ENCODE measurements at regions of chr14 and their contacts with region 1.

Region 1: DNA sequence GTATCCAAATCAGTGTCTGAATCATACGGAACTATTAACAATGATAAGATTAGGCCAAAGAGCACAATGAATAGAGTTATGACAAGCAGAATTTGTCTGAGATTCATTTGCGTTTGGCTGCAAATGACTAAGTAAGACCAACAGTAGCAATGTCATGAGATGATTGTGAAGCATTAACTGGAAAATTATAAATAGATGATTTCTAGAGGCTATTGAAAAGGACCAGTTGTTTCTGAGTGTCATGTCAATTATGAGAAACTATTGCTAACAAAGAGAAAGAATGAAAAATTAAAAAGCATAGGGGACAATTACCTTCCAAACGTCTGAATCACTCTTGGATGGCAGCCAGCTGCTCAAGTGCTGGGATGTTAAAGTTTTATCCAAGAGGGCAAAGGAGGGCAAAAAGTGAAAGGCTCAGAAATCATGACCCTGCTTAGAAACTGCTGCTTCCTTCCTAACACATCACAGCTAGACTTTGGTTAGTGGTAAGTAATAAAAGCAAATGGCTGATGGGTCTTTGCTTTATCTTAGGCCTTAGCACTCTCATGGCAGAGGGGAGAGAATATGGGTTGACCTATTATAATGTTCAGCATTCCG is 89.0 kb downstream of the AKAP6 start:
- DNase-seq: peak in 1 of 2 donors; percentile 34
- ATAC-seq: peak in 5 of 8 donors; percentile 32 to 68 (median 42)
- H3K4me3 ChIP-seq: peak overlapping the region in 9 of 10 donors; percentile 8 to 47 (median 35)
- H3K27ac ChIP-seq: peak overlapping the region; percentile 23 to 88 (median 76)
- H3K4me1 ChIP-seq: peaks cover 0 to 32% (median 13%) of the 10 kb centered on the region in 9 donors
- H3K27me3 ChIP-seq: no peaks in the 10 kb centered on the region
- CTCF ChIP-seq: no peak

Region 2: DNA sequence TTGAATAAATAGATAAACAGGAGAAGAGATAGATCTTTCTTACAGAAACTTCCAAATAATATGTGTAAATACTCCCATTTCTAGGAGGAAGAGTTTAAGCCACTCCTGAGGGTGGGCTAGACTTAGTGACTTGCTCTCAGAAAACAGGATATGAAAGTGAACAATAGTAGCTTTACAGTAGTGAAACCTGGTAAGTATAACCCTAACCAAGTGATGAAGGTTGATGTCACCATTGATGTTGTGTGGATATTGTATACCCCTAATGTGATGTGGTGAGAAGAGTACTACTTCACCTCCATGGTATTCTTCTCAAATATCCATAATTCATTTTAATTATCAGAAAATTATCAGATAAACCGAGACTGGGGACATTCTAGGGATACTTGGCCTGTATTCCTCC is 68.0 kb before region 1 on chr14:
- intact Hi-C with region 1: no loop called
- DNase-seq: no peak
- ATAC-seq: no peak
- H3K4me3 ChIP-seq: no peak overlapping the region
- H3K27ac ChIP-seq: no peak overlapping the region
- H3K4me1 ChIP-seq: peaks cover 0 to 10% (median 0%) of the 10 kb centered on the region in 9 donors
- H3K27me3 ChIP-seq: no peaks in the 10 kb centered on the region
- CTCF ChIP-seq: no peak

Region 3: DNA sequence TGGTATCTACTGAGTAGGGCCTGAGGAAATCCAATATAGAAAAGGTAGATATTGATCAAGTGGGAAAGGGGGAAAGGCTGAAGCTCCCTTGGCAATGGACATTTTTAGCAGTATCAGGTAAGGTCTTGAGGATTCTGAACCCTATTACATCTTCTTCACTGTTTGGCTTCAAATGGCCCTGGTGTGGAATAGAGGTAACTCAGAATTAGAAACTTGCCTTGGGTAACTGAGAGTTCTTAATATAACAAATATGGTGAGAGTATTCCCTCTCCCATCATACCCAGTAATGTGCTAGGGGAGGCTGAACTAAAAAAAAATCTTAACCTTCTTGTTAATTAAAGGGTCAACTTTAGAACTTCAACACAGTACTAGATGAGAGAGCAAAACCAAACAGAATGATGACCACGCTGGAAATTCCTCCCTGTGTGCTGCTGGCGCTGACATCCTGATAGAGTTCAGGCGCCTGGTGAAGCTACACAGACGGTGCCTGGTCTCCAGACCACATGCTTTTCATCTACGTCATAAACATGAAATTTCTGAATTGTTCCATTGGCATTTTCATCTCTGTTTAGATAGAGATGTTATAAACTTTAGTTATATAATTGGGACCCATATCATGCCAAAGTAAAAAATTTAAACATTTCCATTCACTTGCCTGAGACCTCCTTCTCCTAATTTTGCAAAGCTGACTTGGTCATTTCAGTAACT is 39.3 kb after region 1 on chr14:
- intact Hi-C with region 1: loop called in 2 of 10 experiments (anchors 5 kb)
- DNase-seq: peak; percentile 54 to 65
- ATAC-seq: peak; percentile 94 to 99 (median 98)
- H3K4me3 ChIP-seq: no peak overlapping the region
- H3K27ac ChIP-seq: peak overlapping the region; percentile 55 to 87 (median 79)
- H3K4me1 ChIP-seq: peaks cover 0 to 34% (median 7%) of the 10 kb centered on the region in 9 donors
- H3K27me3 ChIP-seq: no peaks in the 10 kb centered on the region
- CTCF ChIP-seq: no peak

Region 4: GRCh38 chr14:32761381-32761968 is 343.4 kb after region 1 on chr14:
- intact Hi-C with region 1: no loop called
- DNase-seq: no peak
- ATAC-seq: no peak
- H3K4me3 ChIP-seq: no peak overlapping the region
- H3K27ac ChIP-seq: no peak overlapping the region
- H3K4me1 ChIP-seq: peaks cover 0 to 23% (median 6%) of the 10 kb centered on the region in 9 donors
- H3K27me3 ChIP-seq: no peaks in the 10 kb centered on the region
- CTCF ChIP-seq: no peak

Measured in heart right ventricle (tissue), 16 donors.